Heart right ventricle (tissue), 16 donors: ENCODE measurements at regions of chr1 and their contacts with region 1.

Region 1: GRCh38 chr1:220690140-220691025 is at the start of gene C1orf115:
- DNase-seq: peak; percentile 70 to 83
- ATAC-seq: peak; percentile 94 to 98 (median 96)
- H3K4me3 ChIP-seq: peak within 1 kb of the TSS; percentile 51 to 93 (median 76)
- H3K27ac ChIP-seq: peak within 1 kb of the TSS; percentile 2 to 87 (median 76)
- H3K4me1 ChIP-seq: peaks cover 0 to 25% (median 14%) of the 10 kb centered on the region in 9 donors
- H3K27me3 ChIP-seq: peaks cover 0 to 27% (median 0%) of the 10 kb centered on the region in 7 donors
- CTCF ChIP-seq: peak; percentile 97 to 100 (median 99)
- total RNA-seq, gene C1orf115: 6.2 to 24.8 (median 12.5) TPM

Region 2: DNA sequence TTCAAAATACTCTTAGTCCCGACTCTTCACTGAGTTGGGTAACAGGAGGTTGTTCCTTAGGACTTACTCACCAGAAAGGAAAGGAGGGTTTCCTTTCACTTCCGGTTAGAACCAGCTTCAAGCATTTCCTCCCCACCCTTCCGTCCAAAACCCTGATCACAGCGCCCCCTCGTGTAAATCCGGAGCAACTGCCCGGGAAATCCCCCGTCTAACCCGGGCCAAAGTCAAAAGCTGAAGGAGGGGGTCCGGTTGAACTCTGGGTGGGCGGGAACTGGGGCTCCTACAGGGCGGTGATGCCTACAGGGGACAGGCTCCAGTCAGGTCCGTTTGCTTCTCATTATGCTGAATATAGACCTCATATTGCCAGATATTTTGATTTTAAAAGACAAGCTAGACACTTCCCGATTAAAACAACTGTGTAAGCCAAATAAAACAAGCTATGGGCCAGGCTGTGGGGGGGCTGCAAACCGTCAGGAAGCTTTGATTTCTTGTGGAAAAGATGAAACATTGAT is 42.8 kb after region 1 on chr1:
- intact Hi-C with region 1: loop called in 9 of 10 experiments (anchors 1 to 5 kb)
- DNase-seq: peak; percentile 74 to 92
- ATAC-seq: peak; percentile 93 to 98 (median 96)
- H3K4me3 ChIP-seq: peak overlapping the region in 9 of 10 donors; percentile 2 to 44 (median 35)
- H3K27ac ChIP-seq: peak overlapping the region; percentile 7 to 93 (median 78)
- H3K4me1 ChIP-seq: peaks cover 0 to 25% (median 18%) of the 10 kb centered on the region in 9 donors
- H3K27me3 ChIP-seq: no peaks in the 10 kb centered on the region
- CTCF ChIP-seq: peak; percentile 81 to 94 (median 90)

Region 3: DNA sequence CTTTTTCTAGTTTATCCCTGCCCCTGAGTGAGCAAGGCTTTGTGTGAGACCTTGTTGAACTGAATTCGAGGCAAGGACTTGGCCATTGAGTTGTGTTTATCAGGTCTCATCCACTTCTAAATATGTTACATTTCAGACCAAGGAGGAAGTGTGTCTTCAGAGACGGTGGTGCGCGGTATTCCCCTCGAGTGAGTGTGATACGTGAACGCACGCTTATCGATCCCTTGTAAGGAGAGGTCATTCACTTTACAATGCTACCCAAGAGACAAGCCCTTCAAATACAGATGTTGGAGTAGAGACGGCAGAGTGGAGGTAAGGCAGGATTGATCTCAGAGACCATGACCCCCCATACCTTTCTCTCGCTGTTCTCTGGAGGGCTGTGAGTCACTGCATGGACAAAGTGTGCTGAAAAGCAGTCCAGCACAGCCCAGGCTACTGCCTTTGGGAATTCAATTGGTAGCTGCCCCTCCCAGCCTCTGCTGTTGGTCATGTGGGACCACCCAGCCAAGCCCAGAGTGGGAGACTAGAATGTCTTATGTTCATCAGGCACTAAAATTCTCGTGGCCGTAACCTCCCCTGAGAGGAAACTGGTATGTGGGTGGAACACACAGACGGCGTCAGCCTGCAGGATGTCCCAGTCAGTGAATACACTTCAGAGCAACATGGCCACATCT is 80.0 kb after region 1 on chr1:
- intact Hi-C with region 1: loop called in 4 of 10 experiments (anchors 5 to 10 kb)
- DNase-seq: no peak
- ATAC-seq: peak in 6 of 8 donors; percentile 21 to 45 (median 34)
- H3K4me3 ChIP-seq: no peak overlapping the region
- H3K27ac ChIP-seq: peak overlapping the region in 1 of 10 donors; percentile 10
- H3K4me1 ChIP-seq: peaks cover 0 to 39% (median 20%) of the 10 kb centered on the region in 9 donors
- H3K27me3 ChIP-seq: no peaks in the 10 kb centered on the region
- CTCF ChIP-seq: no peak